Ascending aorta (tissue), 2 donors: ENCODE measurements at regions of chr7 and their contacts with region 1.

Region 1: DNA sequence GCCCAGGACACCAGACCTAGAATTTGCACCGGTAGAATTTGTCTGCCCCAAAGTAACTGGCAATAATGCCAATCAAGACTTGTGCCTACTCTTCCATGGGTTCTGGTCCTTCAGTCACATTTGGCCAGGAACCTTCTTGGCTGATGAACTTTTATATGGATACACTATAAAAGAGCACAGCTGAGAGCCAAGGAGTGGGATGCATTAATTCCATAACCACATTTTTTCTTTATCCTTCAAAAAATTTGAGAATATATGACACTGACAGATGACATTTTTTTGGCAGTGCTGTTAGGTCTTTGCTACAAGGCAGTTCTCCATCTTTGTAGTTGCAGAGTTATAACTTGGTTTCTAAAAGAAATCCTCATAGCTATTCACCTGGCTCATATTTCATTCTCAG is 129.2 kb upstream of the HDAC9 start:
- DNase-seq: no peak
- H3K4me3 ChIP-seq: no peak overlapping the region
- H3K27ac ChIP-seq: no peak overlapping the region
- H3K4me1 ChIP-seq: no peaks in the 10 kb centered on the region
- H3K27me3 ChIP-seq: no peaks in the 10 kb centered on the region
- CTCF ChIP-seq: no peak

Region 2: GRCh38 chr7:18408461-18408860 is 42.1 kb after region 1 on chr7:
- intact Hi-C with region 1: loop called (anchors 5 kb)
- DNase-seq: no peak
- H3K4me3 ChIP-seq: no peak overlapping the region
- H3K27ac ChIP-seq: peak overlapping the region in 1 of 2 donors; percentile 31
- H3K4me1 ChIP-seq: peaks cover 0 to 4% of the 10 kb centered on the region in 2 donors
- H3K27me3 ChIP-seq: no peaks in the 10 kb centered on the region
- CTCF ChIP-seq: no peak